ENCODE measurements at regions of chr17 and their contacts with region 1.

Region 1: DNA sequence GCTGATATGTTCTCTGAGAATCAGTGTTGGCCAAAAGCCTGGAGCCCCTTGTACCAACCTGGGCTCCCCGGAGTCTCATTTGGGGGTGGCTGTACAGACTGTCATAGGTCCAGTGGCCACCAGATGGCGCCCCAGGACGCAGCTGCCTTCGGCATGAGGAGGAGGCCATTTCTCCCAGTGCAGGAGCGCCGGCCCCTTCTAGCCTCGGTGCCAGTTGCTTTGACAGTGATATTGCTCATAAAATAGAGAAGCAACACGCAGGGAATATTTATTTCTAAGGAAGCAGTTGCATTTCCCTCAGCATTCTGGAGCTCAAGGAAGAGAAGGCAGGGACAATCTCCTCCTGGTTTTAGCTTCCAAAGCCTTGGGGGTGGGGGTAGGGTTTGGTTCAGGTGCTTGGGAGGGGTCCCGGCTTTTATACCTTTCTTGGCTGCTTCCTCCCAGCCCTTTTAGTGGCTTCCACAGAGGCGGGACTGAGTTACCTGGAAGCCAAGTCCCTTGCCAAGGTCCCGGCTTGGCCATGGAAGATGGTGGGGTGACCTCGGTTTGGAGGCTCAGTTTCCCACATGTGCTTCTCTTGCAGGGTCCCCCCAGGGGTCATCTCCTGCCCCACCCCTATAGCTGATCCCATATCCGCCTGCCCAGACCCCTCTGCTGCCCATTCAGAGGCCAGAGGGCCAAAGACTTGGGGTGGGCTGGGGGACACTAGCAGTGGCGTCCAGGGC is 117.8 kb upstream of the CDC42EP4 start:
- DNase-seq: peak; percentile 96
- H3K4me3 ChIP-seq: peak overlapping the region in 1 of 2 experiments; percentile 18; a peak in 1 of 4 replicates
- H3K27ac ChIP-seq: no peak overlapping the region
- H3K4me1 ChIP-seq: peaks cover 0 to 12% of the 10 kb centered on the region in 2 experiments; a peak in 1 of 4 replicates
- H3K27me3 ChIP-seq: no peaks in the 10 kb centered on the region
- CTCF ChIP-seq: peak; percentile 100
- EP300 ChIP-seq: peak in 1 of 2 experiments; percentile 24; a peak in 1 of 4 replicates
- RAD21 ChIP-seq: peak; percentile 100

Region 2: DNA sequence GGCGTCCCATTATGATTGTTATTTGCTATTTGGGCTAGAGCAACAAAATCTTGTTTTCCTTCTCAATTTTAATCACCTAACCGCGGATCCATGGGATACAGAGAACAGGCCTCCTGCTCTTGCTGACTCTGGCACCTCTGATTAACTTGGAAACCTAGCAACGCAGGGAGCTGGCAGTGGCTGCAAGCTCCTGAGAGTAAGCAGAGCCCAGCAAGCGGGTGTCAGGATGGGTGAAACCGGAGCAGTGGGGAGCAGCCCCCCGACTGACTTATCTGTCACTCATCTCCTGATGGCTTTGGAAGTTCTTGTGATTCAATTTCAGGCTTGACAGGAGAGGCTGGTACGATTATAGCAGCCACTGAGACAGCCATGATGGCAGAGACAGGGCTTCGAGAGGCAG is 72.3 kb before region 1 on chr17:
- CTCF ChIA-PET with region 1: no interaction called
- POLR2A ChIA-PET with region 1: no interaction called
- DNase-seq: peak; percentile 97
- H3K4me3 ChIP-seq: no peak overlapping the region
- H3K27ac ChIP-seq: peak overlapping the region in 1 of 2 experiments; percentile 96; a peak in 2 of 4 replicates
- H3K4me1 ChIP-seq: peaks cover 0 to 66% of the 10 kb centered on the region in 2 experiments; a peak in 1 of 4 replicates
- H3K27me3 ChIP-seq: no peaks in the 10 kb centered on the region
- CTCF ChIP-seq: no peak
- EP300 ChIP-seq: peak in 1 of 2 experiments; percentile 93; a peak in 2 of 4 replicates
- RAD21 ChIP-seq: peak; percentile 44

Region 3: DNA sequence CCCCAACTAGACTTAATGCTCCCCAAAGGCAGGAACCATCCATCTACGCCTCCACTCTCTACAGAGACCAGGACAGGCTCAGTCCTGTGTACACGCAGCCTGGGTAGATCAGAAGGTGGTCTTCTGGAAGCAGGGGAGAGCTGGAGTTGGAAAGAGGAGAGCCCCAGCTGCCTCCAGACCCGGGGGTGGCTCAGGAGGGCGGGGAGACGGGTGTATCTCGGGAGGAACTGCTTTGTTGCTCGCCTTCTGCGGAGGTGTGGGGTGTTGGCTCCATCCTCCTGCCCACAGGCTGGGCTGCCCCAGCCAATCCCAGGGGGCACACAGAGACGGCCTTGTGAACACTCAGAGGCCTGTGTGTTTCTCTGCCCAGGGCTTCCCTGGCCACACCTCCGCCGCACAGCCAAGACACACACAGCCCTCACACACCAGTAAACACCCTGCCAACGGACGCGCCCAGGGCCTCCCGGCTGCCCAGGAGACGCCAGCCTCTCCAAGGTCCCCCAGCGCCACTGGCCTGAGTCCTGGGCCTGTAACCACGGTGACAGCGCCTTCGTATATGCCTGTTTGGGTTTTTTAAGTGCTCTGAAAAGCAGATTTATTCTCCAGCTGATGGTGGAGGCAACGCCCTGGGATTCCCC is 25.6 kb after region 1 on chr17:
- CTCF ChIA-PET with region 1: interaction called, 12 read pairs
- POLR2A ChIA-PET with region 1: no interaction called
- DNase-seq: peak; percentile 67
- H3K4me3 ChIP-seq: no peak overlapping the region
- H3K27ac ChIP-seq: no peak overlapping the region
- H3K4me1 ChIP-seq: peaks cover 0 to 27% of the 10 kb centered on the region in 2 experiments; a peak in 1 of 4 replicates
- H3K27me3 ChIP-seq: no peaks in the 10 kb centered on the region
- CTCF ChIP-seq: no peak
- EP300 ChIP-seq: no peak
- RAD21 ChIP-seq: no peak

Region 4: GRCh38 chr17:73532421-73532901 is 102.9 kb after region 1 on chr17:
- CTCF ChIA-PET with region 1: interaction called, 38 read pairs
- POLR2A ChIA-PET with region 1: no interaction called
- DNase-seq: peak; percentile 88
- H3K4me3 ChIP-seq: no peak overlapping the region
- H3K27ac ChIP-seq: peak overlapping the region in 1 of 2 experiments; percentile 86; a peak in 2 of 4 replicates
- H3K4me1 ChIP-seq: peaks cover 0 to 51% of the 10 kb centered on the region in 2 experiments; a peak in 1 of 4 replicates
- H3K27me3 ChIP-seq: no peaks in the 10 kb centered on the region
- CTCF ChIP-seq: no peak
- EP300 ChIP-seq: peak in 1 of 2 experiments; percentile 87; a peak in 2 of 4 replicates
- RAD21 ChIP-seq: no peak; the same call in 1 of the 2 replicates

Region 5: GRCh38 chr17:73575470-73576221 is 146.0 kb after region 1 on chr17:
- CTCF ChIA-PET with region 1: interaction called, 13 read pairs
- POLR2A ChIA-PET with region 1: no interaction called
- DNase-seq: peak; percentile 71
- H3K4me3 ChIP-seq: no peak overlapping the region
- H3K27ac ChIP-seq: no peak overlapping the region
- H3K4me1 ChIP-seq: peaks cover 0 to 11% of the 10 kb centered on the region in 2 experiments; a peak in 1 of 4 replicates
- H3K27me3 ChIP-seq: no peaks in the 10 kb centered on the region
- CTCF ChIP-seq: no peak
- EP300 ChIP-seq: peak in 1 of 2 experiments; percentile 55; a peak in 1 of 4 replicates
- RAD21 ChIP-seq: no peak

Region 6: DNA sequence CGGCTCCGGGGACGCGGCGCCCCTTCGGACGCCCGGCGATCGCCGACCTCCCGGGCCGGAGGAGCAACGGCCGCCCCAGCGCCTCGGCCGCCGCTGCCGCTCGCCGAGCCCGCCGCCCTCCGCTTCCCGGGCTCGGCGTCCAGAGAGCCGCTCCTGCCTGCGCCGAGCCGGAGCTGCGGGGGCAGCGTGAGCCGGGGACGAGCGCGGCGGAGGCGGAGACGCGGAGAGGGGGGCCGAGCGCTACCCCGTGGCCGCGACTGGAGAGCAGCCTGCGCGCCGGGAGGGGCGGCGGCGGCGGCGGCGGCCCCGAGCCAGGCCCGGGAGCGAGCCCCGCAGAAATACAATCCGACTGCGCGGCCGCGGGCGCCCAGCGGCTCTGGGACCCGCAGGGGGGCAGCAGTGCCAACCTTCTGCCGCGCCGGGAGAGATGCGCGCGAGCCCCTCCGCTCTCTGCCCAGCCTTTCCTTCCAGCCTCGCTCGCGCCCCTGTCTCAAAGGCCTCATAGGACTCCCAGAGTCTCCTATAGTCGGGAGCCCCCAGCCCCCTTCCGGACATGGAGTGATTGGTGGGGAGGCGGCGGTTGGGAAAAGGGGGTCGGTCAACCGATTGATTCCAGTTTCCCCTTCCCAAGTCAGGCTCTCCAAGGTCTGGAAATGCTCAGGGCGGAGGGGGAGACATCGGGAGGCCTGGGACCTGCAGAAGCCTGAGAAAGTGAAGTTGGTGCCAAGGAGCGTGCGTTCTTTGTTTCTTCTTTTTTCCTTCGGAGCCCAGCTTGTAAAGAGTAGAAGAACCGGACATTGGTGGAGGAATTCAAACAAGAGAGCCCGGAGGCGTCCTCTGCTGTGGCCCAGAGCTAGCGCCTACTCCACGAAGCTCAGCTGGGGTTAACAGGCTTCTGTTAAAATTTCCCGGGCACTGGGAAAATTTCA is 215.7 kb after region 1 on chr17:
- CTCF ChIA-PET with region 1: interaction called, 118 read pairs
- POLR2A ChIA-PET with region 1: no interaction called
- DNase-seq: peak; percentile 90
- H3K4me3 ChIP-seq: peak overlapping the region in 1 of 2 experiments; percentile 35; a peak in 3 of 4 replicates
- H3K27ac ChIP-seq: no peak overlapping the region
- H3K4me1 ChIP-seq: peaks cover 0 to 21% of the 10 kb centered on the region in 2 experiments; a peak in 2 of 4 replicates
- H3K27me3 ChIP-seq: peaks cover 41% of the 10 kb centered on the region
- CTCF ChIP-seq: no peak
- EP300 ChIP-seq: no peak
- RAD21 ChIP-seq: no peak

Region 7: GRCh38 chr17:74176546-74177001 is 747.0 kb after region 1 on chr17:
- CTCF ChIA-PET with region 1: interaction called, 18 read pairs
- POLR2A ChIA-PET with region 1: no interaction called
- DNase-seq: peak; percentile 91
- H3K4me3 ChIP-seq: peak overlapping the region in 1 of 2 experiments; percentile 18; a peak in 1 of 4 replicates
- H3K27ac ChIP-seq: no peak overlapping the region
- H3K4me1 ChIP-seq: peaks cover 0 to 10% of the 10 kb centered on the region in 2 experiments; a peak in 1 of 4 replicates
- H3K27me3 ChIP-seq: no peaks in the 10 kb centered on the region
- CTCF ChIP-seq: peak; percentile 94
- EP300 ChIP-seq: no peak
- RAD21 ChIP-seq: peak; percentile 100

Measured in SK-N-SH (cell line).